Heart left ventricle (tissue), 16 donors: ENCODE measurements at regions of chr2 and their contacts with region 1.

Region 1: GRCh38 chr2:190904640-190905261 is 24.1 kb downstream of the GLS start:
- DNase-seq: no peak
- ATAC-seq: no peak
- H3K4me3 ChIP-seq: no peak overlapping the region
- H3K27ac ChIP-seq: no peak overlapping the region
- H3K4me1 ChIP-seq: no peaks in the 10 kb centered on the region
- H3K27me3 ChIP-seq: no peaks in the 10 kb centered on the region
- CTCF ChIP-seq: no peak
- POLR2A ChIP-seq: no peak

Region 2: DNA sequence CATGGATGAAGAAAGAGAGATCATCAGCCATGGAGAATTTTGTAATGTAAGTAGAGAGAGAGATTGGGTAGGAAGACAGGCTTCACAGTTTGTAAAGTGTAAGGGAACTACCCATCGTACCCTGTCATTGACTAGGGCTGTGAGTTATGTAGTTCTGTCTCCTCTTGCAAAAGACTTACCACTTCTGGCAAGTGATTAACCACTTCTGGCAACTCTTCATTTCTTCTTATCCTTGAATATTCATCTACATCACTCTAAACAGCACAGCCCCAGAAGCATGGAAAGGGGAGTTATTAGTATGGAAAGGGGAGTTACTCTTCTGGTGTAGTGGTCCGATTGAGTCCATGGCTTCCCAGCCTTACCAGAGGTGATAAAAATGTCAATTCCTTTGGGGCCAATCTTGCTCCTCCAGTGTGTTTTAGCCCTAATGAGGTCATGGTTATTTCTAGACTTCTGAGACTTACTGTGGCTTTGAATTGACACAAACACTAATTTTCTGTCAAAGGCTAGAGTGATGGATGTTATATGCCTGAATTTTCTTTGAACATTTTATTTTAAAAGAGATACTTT is 57.3 kb after region 1 on chr2:
- intact Hi-C with region 1: loop called in 1 of 10 experiments (anchors 10 kb)
- DNase-seq: no peak
- ATAC-seq: peak in 3 of 4 donors; percentile 32 to 61 (median 57)
- H3K4me3 ChIP-seq: no peak overlapping the region
- H3K27ac ChIP-seq: no peak overlapping the region
- H3K4me1 ChIP-seq: peaks cover 0 to 10% (median 0%) of the 10 kb centered on the region in 12 donors
- H3K27me3 ChIP-seq: no peaks in the 10 kb centered on the region
- CTCF ChIP-seq: no peak
- POLR2A ChIP-seq: no peak